ENCODE measurements at regions of chr11 and their contacts with region 1.

Region 1: GRCh38 chr11:111601979-111602864 is at the start of gene SIK2:
- DNase-seq: peak; percentile 88
- ATAC-seq: peak; percentile 87
- H3K4me3 ChIP-seq: peak within 1 kb of the TSS; percentile 93
- H3K27ac ChIP-seq: peak within 1 kb of the TSS; percentile 74
- H3K4me1 ChIP-seq: peaks cover 13% of the 10 kb centered on the region
- H3K27me3 ChIP-seq: no peaks in the 10 kb centered on the region
- CTCF ChIP-seq: peak; percentile 91 to 99 (median 99); a peak in 5 of 6 replicates
- EP300 ChIP-seq: 0 out of 4 replicates have a peak, but pooled peaks of 1 of the 2 experiments have one; percentile 9
- POLR2A ChIP-seq: peak; percentile 67; the same call in 1 of the 2 replicates
- RAD21 ChIP-seq: peak; percentile 97
- polyA plus RNA-seq, gene SIK2: 0.97 to 1.1 TPM

Region 2: GRCh38 chr11:111586388-111586831 is 15.8 kb before region 1 on chr11:
- CTCF ChIA-PET with region 1: interaction called, 14 read pairs
- POLR2A ChIA-PET with region 1: interaction called, 5 read pairs
- RAD21 ChIA-PET with region 1: interaction called, 14 read pairs
- SMC1A ChIA-PET with region 1: interaction called, 5 read pairs
- in situ Hi-C with region 1: no loop called
- intact Hi-C with region 1: no loop called
- DNase-seq: no peak
- ATAC-seq: peak; percentile 84
- H3K4me3 ChIP-seq: no peak overlapping the region
- H3K27ac ChIP-seq: no peak overlapping the region
- H3K4me1 ChIP-seq: no peaks in the 10 kb centered on the region; the same call in 1 of the 2 replicates
- H3K27me3 ChIP-seq: no peaks in the 10 kb centered on the region; a peak in 1 of 4 replicates
- CTCF ChIP-seq: peak; percentile 53 to 74 (median 67)
- EP300 ChIP-seq: no peak
- POLR2A ChIP-seq: no peak
- RAD21 ChIP-seq: peak; percentile 79

Region 3: GRCh38 chr11:111631666-111632039 is 29.4 kb after region 1 on chr11:
- CTCF ChIA-PET with region 1: interaction called, 11 read pairs
- POLR2A ChIA-PET with region 1: no interaction called
- RAD21 ChIA-PET with region 1: interaction called, 4 read pairs
- SMC1A ChIA-PET with region 1: interaction called, 3 read pairs
- in situ Hi-C with region 1: no loop called
- intact Hi-C with region 1: no loop called
- DNase-seq: no peak
- ATAC-seq: peak; percentile 52
- H3K4me3 ChIP-seq: no peak overlapping the region
- H3K27ac ChIP-seq: no peak overlapping the region
- H3K4me1 ChIP-seq: no peaks in the 10 kb centered on the region
- H3K27me3 ChIP-seq: no peaks in the 10 kb centered on the region
- CTCF ChIP-seq: no peak
- EP300 ChIP-seq: no peak
- POLR2A ChIP-seq: no peak
- RAD21 ChIP-seq: no peak

Region 4: GRCh38 chr11:111707039-111707690 is 104.9 kb after region 1 on chr11:
- CTCF ChIA-PET with region 1: interaction called, 4 read pairs
- POLR2A ChIA-PET with region 1: no interaction called
- RAD21 ChIA-PET with region 1: interaction called, 3 read pairs
- SMC1A ChIA-PET with region 1: interaction called, 10 read pairs
- in situ Hi-C with region 1: no loop called
- intact Hi-C with region 1: no loop called
- DNase-seq: no peak
- ATAC-seq: no peak
- H3K4me3 ChIP-seq: no peak overlapping the region
- H3K27ac ChIP-seq: no peak overlapping the region
- H3K4me1 ChIP-seq: no peaks in the 10 kb centered on the region
- H3K27me3 ChIP-seq: no peaks in the 10 kb centered on the region
- CTCF ChIP-seq: no peak
- EP300 ChIP-seq: no peak
- POLR2A ChIP-seq: no peak
- RAD21 ChIP-seq: no peak

Region 5: GRCh38 chr11:111730871-111731591 is 128.8 kb after region 1 on chr11:
- CTCF ChIA-PET with region 1: interaction called, 10 read pairs
- POLR2A ChIA-PET with region 1: no interaction called
- RAD21 ChIA-PET with region 1: interaction called, 3 read pairs
- SMC1A ChIA-PET with region 1: interaction called, 4 read pairs
- in situ Hi-C with region 1: no loop called
- intact Hi-C with region 1: no loop called
- DNase-seq: no peak
- ATAC-seq: no peak
- H3K4me3 ChIP-seq: no peak overlapping the region
- H3K27ac ChIP-seq: no peak overlapping the region
- H3K4me1 ChIP-seq: no peaks in the 10 kb centered on the region
- H3K27me3 ChIP-seq: no peaks in the 10 kb centered on the region
- CTCF ChIP-seq: no peak
- EP300 ChIP-seq: no peak
- POLR2A ChIP-seq: peak; percentile 24; the same call in 1 of the 2 replicates
- RAD21 ChIP-seq: no peak

Region 6: DNA sequence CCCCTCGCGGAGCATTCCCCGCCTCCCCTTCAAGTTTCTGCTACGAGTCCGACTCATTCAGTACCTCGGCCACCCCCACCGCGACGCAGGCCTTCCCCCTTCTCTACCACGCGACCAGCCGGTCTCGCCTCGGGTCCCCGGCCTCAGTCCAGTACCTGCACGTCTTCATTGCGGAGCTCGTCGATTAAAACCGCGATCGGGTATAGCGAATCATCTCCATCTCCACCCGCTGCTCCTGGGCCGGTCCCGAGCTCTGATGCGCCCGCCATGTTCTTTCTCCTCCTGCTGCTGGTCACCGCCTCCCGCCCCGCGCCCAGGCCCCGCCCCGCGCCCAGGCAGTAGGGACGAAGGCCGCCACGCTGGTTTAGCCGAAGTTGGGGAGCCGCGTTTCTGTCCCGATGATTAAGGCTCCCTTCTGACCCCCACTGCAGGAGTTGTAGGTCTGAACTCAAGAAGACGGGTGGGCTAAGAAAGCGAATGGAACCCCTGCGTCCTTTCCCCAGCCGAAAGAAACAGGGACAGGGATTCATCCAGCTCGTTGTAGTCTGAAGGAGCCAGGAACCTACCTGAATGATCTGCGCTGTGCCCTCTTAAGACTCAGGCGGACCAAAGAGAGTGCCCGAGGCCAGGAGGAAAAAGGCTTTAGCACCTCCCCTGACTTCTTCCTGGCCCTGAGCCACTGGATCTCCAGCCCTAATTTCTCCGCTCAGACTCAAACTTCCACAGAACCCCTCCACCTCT is 164.0 kb after region 1 on chr11 and contains the start of gene PPP2R1B:
- CTCF ChIA-PET with region 1: interaction called, 174 read pairs
- POLR2A ChIA-PET with region 1: interaction called, 36 read pairs
- RAD21 ChIA-PET with region 1: interaction called, 90 read pairs
- SMC1A ChIA-PET with region 1: interaction called, 42 read pairs
- in situ Hi-C with region 1: no loop called
- intact Hi-C with region 1: loop called (anchors 2 kb)
- DNase-seq: peak; percentile 35
- ATAC-seq: peak; percentile 97
- H3K4me3 ChIP-seq: peak within 1 kb of the TSS; percentile 78
- H3K27ac ChIP-seq: peak within 1 kb of the TSS; percentile 77
- H3K4me1 ChIP-seq: no peaks in the 10 kb centered on the region; the same call in 1 of the 2 replicates
- H3K27me3 ChIP-seq: no peaks in the 10 kb centered on the region
- CTCF ChIP-seq: no peak
- EP300 ChIP-seq: no peak
- POLR2A ChIP-seq: peak; percentile 89
- RAD21 ChIP-seq: no peak
- polyA plus RNA-seq, gene PPP2R1B: 28.5 to 37.0 TPM

Region 7: GRCh38 chr11:111841370-111842053 is 239.3 kb after region 1 on chr11:
- CTCF ChIA-PET with region 1: interaction called, 13 read pairs
- POLR2A ChIA-PET with region 1: interaction called, 4 read pairs
- RAD21 ChIA-PET with region 1: interaction called, 17 read pairs
- SMC1A ChIA-PET with region 1: interaction called, 16 read pairs
- in situ Hi-C with region 1: loop called (anchors 5 kb)
- intact Hi-C with region 1: loop called (anchors 1 kb)
- DNase-seq: peak; percentile 48
- ATAC-seq: peak; percentile 88
- H3K4me3 ChIP-seq: no peak overlapping the region
- H3K27ac ChIP-seq: no peak overlapping the region
- H3K4me1 ChIP-seq: peaks cover 6% of the 10 kb centered on the region; the same call in 1 of the 2 replicates
- H3K27me3 ChIP-seq: no peaks in the 10 kb centered on the region
- CTCF ChIP-seq: peak; percentile 79 to 91 (median 82)
- EP300 ChIP-seq: no peak
- POLR2A ChIP-seq: no peak
- RAD21 ChIP-seq: peak; percentile 93

Measured in GM12878 (cell line).